ENCODE measurements at regions of chr15 and their contacts with region 1.

Region 1: GRCh38 chr15:92797168-92797951 is 102.8 kb upstream of the CHD2 start:
- DNase-seq: peak; percentile 68
- ATAC-seq: peak; percentile 87
- H3K4me3 Mint-ChIP-seq: no peak overlapping the region
- H3K27ac Mint-ChIP-seq: no peak overlapping the region
- H3K4me1 Mint-ChIP-seq: peaks cover 4% of the 10 kb centered on the region
- H3K27me3 Mint-ChIP-seq: no peaks in the 10 kb centered on the region

Region 2: DNA sequence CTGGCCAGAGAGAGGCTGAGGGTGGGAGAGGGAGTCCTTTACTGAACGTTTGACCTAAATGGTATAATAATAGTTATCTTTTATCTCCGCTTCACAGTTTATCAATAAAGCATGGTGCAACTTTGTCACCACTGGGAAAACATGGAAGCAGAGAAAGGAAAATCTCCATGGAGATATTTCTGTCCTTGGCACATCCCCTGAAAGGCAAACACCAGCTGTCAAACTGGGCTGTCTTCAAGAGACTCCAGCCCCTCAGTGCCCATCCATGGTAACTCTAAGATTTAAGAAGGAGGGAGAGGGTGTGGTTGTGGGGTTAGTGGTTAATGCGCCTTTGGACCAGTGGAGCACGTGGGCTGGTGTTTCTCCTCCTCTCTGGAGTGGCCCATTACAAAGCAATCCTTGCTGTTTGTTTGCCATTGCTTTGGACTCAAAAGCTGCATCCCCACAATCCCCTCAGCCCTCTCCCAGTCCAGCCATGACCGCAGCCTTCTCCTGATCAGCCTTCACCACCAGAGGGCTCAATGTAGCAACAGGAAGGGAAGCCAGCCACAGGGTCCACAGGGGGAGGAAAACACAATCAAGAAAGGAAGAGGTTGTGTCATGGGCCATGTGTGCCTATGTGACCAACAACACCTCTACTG is 103.5 kb before region 1 on chr15:
- CTCF ChIA-PET with region 1: no interaction called
- POLR2A ChIA-PET with region 1: no interaction called
- DNase-seq: no peak
- ATAC-seq: no peak
- H3K4me3 Mint-ChIP-seq: no peak overlapping the region
- H3K27ac Mint-ChIP-seq: no peak overlapping the region
- H3K4me1 Mint-ChIP-seq: no peaks in the 10 kb centered on the region
- H3K27me3 Mint-ChIP-seq: peaks cover 7% of the 10 kb centered on the region

Region 3: DNA sequence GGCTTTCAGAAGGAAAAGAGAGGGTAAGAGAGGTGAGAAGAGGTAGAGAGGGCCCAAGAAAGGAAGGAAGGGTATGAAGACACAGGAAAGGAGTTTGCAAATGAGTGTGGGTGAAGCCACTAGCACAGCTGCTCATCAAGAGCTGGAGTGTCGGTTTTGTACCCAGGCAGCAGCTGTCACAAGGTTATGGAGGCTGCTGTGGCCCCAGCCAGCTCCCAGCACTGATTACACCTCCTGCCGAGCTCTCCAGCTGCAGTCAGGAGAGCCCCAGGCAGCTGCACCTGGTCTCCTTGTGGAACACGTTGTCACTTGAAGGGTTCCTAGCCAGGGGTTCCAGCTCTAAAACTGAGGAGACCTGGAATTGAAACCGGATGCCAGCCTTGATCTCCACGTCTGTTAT is 42.3 kb after region 1 on chr15:
- CTCF ChIA-PET with region 1: no interaction called
- POLR2A ChIA-PET with region 1: no interaction called
- DNase-seq: peak; percentile 40
- ATAC-seq: peak; percentile 60
- H3K4me3 Mint-ChIP-seq: peak overlapping the region; percentile 17
- H3K27ac Mint-ChIP-seq: peak overlapping the region; percentile 74
- H3K4me1 Mint-ChIP-seq: peaks cover 46% of the 10 kb centered on the region
- H3K27me3 Mint-ChIP-seq: no peaks in the 10 kb centered on the region

Region 4: GRCh38 chr15:92903941-92904831 is 106.8 kb after region 1 on chr15:
- CTCF ChIA-PET with region 1: interaction called, 15 read pairs
- POLR2A ChIA-PET with region 1: interaction called, 3 read pairs
- DNase-seq: peak; percentile 99
- ATAC-seq: peak; percentile 87
- H3K4me3 Mint-ChIP-seq: peak overlapping the region; percentile 83
- H3K27ac Mint-ChIP-seq: peak overlapping the region; percentile 98
- H3K4me1 Mint-ChIP-seq: peaks cover 57% of the 10 kb centered on the region
- H3K27me3 Mint-ChIP-seq: no peaks in the 10 kb centered on the region

Region 5: DNA sequence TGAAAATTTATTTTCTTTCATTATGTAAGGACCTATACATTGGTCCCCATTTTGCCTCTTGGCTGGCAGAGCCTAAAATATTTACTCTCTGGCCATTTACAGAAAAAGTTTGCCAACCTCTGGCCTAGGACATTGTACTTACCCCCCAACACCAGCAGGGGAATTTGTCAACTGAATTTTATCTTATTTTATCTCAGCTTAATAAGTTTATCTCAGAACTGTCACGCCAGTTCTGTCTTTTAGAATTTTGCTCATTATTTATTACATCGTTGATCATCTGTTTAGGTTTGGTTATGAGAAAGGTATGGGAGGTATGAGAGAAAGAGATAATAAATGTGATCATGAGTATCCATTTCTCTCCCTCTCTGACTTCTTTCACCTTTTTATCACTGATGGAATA is 141.0 kb after region 1 on chr15:
- CTCF ChIA-PET with region 1: interaction called, 22 read pairs
- POLR2A ChIA-PET with region 1: no interaction called
- DNase-seq: no peak
- ATAC-seq: no peak
- H3K4me3 Mint-ChIP-seq: no peak overlapping the region
- H3K27ac Mint-ChIP-seq: no peak overlapping the region
- H3K4me1 Mint-ChIP-seq: peaks cover 33% of the 10 kb centered on the region
- H3K27me3 Mint-ChIP-seq: no peaks in the 10 kb centered on the region

Region 6: GRCh38 chr15:93018580-93018979 is 221.2 kb after region 1 on chr15:
- CTCF ChIA-PET with region 1: interaction called, 11 read pairs
- POLR2A ChIA-PET with region 1: interaction called, 3 read pairs
- DNase-seq: no peak
- ATAC-seq: no peak
- H3K4me3 Mint-ChIP-seq: no peak overlapping the region
- H3K27ac Mint-ChIP-seq: no peak overlapping the region
- H3K4me1 Mint-ChIP-seq: peaks cover 36% of the 10 kb centered on the region
- H3K27me3 Mint-ChIP-seq: no peaks in the 10 kb centered on the region